Activated CD4-positive, alpha-beta memory T cell treated with anti-CD3 and anti-CD28 coated beads, Interleukin-2, amount 10 ng/mL, durations not matched to agents 7 days and 5 days (primary cell): ENCODE measurements at regions of chr3 and their contacts with region 1.

Region 1: DNA sequence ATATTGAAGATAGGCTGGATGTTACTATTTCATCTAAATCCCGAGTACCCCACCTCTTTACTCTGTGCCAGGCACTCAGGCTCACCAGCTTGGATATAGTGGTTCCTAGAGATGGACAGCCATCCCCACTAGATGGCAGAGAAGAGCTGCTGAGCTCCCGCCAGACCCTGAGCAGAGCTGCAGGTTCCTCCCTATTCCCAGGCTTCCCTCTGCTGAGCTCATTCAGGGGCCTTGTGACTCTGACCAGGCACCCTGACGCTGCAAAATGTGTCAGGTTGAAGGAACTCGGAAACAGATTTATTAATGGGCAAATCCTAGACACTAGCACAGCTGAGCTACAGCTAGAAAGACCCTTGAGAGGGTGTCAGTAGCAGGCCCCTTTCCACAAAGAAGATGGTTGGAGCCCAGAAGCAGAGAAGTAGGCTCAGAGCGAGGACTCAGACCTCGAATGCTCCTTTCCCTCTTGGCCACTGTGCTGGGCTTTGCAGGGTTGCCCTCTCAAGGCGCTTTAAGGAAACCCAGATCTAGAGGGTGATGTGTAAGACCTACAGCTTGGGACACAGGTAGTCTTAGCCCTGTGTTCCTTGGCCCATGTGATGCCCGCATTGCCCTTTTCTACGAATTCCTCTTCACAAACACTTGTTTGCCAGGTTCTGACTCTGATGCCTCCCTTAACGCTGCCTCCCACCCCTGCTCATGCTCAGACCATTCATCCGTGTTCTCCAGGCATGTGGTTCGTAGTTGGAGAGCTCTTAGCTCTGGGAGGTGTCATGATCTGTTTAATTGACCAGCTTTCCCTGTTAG is 38.0 kb upstream of the RHO start:
- DNase-seq: peak; percentile 65
- H3K4me3 Mint-ChIP-seq: no peak overlapping the region
- H3K27ac Mint-ChIP-seq: no peak overlapping the region
- H3K4me1 Mint-ChIP-seq: peaks cover 4% of the 10 kb centered on the region
- H3K27me3 Mint-ChIP-seq: no peaks in the 10 kb centered on the region

Region 2: DNA sequence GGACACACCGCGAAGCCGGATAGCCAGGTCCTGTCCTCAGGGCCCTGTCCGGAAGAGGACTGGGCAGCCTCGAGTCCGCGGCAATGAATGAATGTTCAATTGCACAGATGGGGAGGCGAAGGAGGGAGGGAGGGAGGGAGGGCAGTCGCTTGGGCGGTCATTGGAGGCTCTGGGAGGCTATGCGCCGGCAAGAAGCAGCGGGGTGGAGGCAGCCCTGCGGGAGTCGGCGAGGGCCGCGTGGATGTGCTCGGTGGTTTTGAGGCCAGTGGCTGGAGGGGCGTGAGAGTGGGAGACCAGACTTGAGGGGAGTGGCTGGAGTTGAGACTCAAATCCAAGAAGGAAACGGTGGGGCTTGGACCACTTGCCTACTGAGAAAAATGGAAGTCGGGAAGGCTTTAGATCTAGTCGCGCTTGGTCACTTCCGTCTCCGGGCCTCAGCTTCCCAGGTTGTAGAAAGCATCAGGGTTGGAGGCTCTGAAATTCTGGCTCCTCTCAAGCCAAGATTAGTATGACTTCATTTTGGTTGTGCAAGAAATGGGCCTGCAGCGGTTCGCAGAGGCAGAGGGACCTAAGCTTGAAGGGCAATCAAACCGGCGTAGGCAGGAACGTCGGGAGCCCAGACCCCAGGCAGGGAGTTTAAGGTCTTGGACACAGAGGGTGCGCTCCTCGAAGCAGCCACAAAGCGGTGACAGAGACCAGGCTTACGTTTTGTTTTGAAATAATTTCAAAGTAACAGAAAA is 137.2 kb after region 1 on chr3:
- CTCF ChIA-PET with region 1: interaction called, 17 read pairs
- POLR2A ChIA-PET with region 1: interaction called, 5 read pairs
- DNase-seq: peak; percentile 73
- H3K4me3 Mint-ChIP-seq: peak overlapping the region; percentile 80
- H3K27ac Mint-ChIP-seq: peak overlapping the region; percentile 79
- H3K4me1 Mint-ChIP-seq: peaks cover 23% of the 10 kb centered on the region
- H3K27me3 Mint-ChIP-seq: peaks cover 7% of the 10 kb centered on the region

Region 3: GRCh38 chr3:129650256-129650872 is 159.9 kb after region 1 on chr3:
- CTCF ChIA-PET with region 1: interaction called, 11 read pairs
- POLR2A ChIA-PET with region 1: no interaction called
- DNase-seq: peak; percentile 68
- H3K4me3 Mint-ChIP-seq: no peak overlapping the region
- H3K27ac Mint-ChIP-seq: no peak overlapping the region
- H3K4me1 Mint-ChIP-seq: no peaks in the 10 kb centered on the region
- H3K27me3 Mint-ChIP-seq: no peaks in the 10 kb centered on the region

Region 4: GRCh38 chr3:129824926-129825541 is 334.6 kb after region 1 on chr3:
- CTCF ChIA-PET with region 1: interaction called, 25 read pairs
- POLR2A ChIA-PET with region 1: no interaction called
- DNase-seq: peak; percentile 49
- H3K4me3 Mint-ChIP-seq: no peak overlapping the region
- H3K27ac Mint-ChIP-seq: no peak overlapping the region
- H3K4me1 Mint-ChIP-seq: peaks cover 23% of the 10 kb centered on the region
- H3K27me3 Mint-ChIP-seq: no peaks in the 10 kb centered on the region

Region 5: DNA sequence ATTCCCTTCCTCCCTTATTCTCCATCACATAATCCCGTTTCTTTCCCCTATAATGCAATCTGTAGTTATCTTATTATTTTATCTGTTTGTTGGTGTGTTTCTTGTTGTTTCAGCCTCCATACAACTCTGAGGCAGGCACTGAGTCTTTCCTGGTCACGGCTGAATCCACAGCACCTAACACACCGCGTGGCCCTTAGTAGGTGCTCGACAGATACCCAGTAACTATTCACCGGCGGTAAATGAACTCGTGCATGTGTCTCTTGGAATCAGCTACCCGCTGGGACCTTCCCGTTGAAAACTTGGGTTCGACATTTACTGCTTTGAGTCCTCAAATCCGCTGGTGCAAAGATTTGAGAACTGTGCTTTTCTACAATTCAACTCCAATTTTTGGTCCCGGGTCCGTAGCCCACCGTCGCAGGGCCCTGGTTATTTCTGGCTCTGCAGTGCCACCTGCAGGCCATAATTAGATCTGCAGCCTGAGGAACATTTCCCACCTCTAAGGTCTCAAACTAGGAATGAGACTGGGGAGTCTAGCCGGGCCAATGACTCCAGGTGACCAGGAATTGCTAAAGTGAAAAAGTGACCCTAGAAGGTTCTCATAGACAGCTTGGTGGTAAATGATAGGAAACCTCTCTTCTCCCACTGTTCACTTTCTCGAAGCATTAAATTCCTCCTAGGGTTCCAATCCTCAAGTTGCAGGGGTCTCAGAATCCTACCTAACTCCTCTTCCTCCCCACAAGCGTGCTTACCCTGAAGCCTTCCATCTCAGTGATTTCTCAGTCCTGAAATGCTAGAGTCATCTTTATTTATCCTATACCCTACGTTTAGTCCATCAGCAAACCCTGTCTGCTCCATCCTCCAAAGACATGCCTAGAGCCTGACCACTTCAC is 444.0 kb after region 1 on chr3:
- CTCF ChIA-PET with region 1: interaction called, 12 read pairs
- POLR2A ChIA-PET with region 1: no interaction called
- DNase-seq: peak; percentile 25
- H3K4me3 Mint-ChIP-seq: no peak overlapping the region
- H3K27ac Mint-ChIP-seq: no peak overlapping the region
- H3K4me1 Mint-ChIP-seq: peaks cover 12% of the 10 kb centered on the region
- H3K27me3 Mint-ChIP-seq: peaks cover 3% of the 10 kb centered on the region